ENCODE measurements at regions of chr1 and their contacts with region 1.

Region 1: DNA sequence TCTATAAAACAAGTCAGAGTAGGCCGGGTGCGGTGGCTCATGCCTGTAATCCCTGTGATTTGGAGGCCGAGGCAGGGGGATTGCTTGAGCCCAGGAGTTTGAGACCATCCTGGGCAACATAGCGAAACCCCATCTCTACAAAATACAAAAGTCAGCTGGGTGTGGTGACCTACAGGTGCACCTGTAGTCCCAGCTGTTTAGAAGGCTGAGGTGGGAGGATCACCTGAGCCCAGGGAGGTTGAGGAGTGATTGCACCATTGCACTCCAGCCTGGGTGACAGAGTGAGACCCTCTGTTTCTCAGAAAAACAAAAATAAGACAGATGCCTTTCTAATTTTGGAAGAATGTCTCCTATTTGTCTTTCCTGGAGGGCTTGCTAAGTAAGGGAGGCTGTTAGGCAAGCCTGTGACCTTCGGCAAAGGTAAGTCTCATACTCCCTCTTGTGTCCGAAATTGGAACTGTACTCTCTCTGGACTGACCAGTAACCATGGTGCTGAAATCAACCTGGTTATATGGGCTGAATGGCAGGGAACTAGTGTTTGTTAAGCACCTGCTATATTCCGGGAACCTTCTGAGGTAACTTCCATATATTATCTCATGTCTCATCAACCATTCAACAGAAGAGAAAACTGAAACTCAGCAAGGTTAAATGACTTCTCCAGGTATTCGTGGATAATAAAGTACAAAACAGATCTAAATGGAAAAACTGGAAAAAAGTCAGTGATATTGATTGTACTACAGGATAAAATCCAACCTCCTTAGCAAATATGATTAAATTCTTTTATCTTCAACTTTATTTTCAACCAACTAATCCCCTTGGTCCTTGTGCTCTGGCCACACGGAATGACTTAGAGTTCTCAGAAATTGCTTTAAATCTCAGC is 11.8 kb upstream of the RAB3B start:
- DNase-seq: peak; percentile 29
- H3K4me3 Mint-ChIP-seq: no peak overlapping the region
- H3K27ac Mint-ChIP-seq: no peak overlapping the region
- H3K4me1 Mint-ChIP-seq: no peaks in the 10 kb centered on the region
- H3K27me3 Mint-ChIP-seq: peaks cover 24% of the 10 kb centered on the region

Region 2: DNA sequence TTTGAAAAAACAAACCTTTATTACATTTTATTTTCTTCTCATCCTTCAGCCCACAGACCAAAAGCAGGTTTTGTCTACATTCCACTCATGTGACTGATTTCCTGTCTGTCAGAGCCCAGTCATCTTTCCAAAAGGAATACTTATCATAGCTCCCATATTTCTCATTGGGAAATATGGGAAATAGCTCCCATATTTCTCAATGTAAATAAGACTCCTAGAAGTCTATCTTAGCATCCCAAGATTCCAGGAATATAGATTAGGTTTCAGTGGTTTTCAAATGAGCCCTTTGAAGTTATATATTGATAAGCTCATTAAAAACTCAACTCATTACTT is 104.6 kb before region 1 on chr1:
- intact Hi-C with region 1: loop called (anchors 1 kb)
- DNase-seq: no peak
- H3K4me3 Mint-ChIP-seq: no peak overlapping the region
- H3K27ac Mint-ChIP-seq: no peak overlapping the region
- H3K4me1 Mint-ChIP-seq: peaks cover 5% of the 10 kb centered on the region
- H3K27me3 Mint-ChIP-seq: peaks cover 44% of the 10 kb centered on the region

Region 3: DNA sequence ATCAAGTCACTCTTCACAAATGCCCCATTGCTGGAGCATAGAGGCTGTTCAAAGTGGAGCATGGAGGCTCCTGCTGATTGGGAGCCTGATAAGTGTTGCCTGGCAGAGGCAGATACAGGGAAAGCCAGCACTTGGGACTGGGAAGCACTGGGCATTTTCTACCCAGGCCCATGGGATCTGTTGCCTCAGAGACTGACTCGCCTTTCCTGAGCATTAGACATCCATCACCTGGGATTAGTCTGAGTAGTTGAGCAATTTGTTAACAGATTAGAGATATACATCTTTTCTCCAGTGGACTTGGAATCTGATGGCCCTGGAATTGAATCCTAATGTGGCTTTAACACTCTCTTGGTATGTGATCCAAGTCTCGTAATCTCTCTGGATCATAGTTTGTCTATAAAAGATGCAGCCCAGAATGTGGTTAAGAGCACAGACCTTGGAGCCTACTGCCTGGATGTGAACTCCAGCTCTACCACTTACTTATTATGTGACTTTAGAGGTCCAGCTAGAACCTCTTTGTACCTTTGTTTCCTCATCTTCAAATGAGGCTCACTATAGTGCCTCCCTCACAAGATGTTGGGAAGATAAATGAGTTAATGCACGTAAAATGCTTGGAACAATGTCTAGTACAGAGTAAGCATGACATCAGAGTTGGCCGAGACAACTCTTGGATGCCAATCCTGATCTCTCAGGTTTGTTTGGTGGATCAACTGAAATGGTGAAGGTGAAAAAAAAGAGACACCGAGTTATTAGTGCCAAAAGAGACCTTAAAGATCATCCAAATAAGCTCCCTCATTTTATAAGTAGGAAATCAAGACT is 85.5 kb before region 1 on chr1:
- intact Hi-C with region 1: no loop called
- DNase-seq: no peak
- H3K4me3 Mint-ChIP-seq: no peak overlapping the region
- H3K27ac Mint-ChIP-seq: no peak overlapping the region
- H3K4me1 Mint-ChIP-seq: no peaks in the 10 kb centered on the region
- H3K27me3 Mint-ChIP-seq: peaks cover 30% of the 10 kb centered on the region

Measured in activated T-helper 2 cell treated with anti-CD3 and anti-CD28 coated beads, Interferon-gamma antibody, Interleukin-2, Interleukin-4, amounts not matched to agents 10 μg/mL and 5 μg/mL and 100 μg/mL, durations not matched to agents 14 hours and 24 hours and 36 hours (primary cell).